HEK293 (cell line): ENCODE measurements at regions of chr6 and their contacts with region 1.

Region 1: DNA sequence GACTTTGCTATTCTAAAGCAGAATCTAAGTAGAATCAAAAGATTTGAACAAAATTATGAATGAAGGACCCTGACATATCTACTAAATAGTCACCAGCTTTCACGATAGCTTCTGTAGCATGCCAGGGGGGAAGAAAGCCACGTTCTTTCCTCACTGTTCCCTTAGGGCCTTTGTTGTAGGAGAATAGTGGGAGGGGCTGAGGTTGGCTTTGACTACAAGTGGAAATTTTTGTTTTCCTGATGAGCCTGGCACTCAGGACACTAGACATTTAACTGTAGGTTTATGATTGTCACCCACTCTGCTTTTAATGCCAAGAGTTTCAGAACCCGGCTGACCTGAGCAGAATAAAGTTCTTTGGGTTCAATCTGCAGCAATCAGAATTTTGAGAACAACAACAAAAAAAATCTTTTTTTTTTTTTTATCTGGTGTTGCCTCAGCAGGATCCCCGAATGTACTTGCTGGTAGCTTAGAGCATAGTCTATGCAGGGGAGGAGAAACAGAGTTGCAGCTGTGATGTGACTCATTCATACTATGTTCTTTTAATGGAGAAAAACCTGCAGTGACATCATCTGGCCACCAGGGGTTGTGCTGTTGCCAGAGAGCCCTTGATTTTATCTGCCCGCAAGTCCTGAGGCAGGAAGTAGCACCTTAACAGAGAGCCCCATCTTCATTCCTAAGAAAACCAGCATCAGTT is 38.5 kb downstream of the TPD52L1 start:
- H3K4me3 ChIP-seq: no peak overlapping the region
- H3K27ac ChIP-seq: no peak overlapping the region
- H3K4me1 ChIP-seq: peaks cover 4% of the 10 kb centered on the region
- CTCF ChIP-seq: no peak

Region 2: GRCh38 chr6:125174626-125175025 is 17.4 kb before region 1 on chr6:
- CTCF ChIA-PET with region 1: interaction called, 18 read pairs
- POLR2A ChIA-PET with region 1: interaction called, 4 read pairs
- H3K4me3 ChIP-seq: no peak overlapping the region
- H3K27ac ChIP-seq: no peak overlapping the region
- H3K4me1 ChIP-seq: no peaks in the 10 kb centered on the region
- CTCF ChIP-seq: no peak

Region 3: GRCh38 chr6:125203395-125203794 is 11.3 kb after region 1 on chr6:
- CTCF ChIA-PET with region 1: interaction called, 20 read pairs
- POLR2A ChIA-PET with region 1: interaction called, 4 read pairs
- H3K4me3 ChIP-seq: no peak overlapping the region
- H3K27ac ChIP-seq: no peak overlapping the region
- H3K4me1 ChIP-seq: peaks cover 11% of the 10 kb centered on the region
- CTCF ChIP-seq: no peak